GM18951 (cell line): ENCODE measurements at regions of chr1 and their contacts with region 1.

Region 1: GRCh38 chr1:180515864-180516388 is 13.5 kb upstream of the ACBD6 start:
- POLR2A ChIP-seq: no peak

Region 2: DNA sequence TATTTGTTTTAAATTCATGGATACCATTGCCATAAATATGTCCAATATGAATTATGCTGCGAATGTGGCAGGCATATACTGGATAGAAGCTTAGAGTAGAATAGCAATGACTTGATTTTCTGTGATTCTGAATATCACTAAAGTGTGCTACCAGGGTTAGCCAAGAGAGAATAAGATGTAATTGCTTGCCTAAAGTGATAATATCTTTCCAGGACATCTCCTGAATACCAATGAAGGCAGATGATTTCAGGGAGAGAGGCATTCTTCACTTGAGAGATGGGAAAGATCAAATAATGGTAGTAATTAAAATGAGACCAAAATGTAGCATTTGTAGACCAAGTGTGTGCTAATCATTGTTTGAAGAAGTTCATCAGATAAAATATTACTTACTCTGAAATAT is 343.4 kb after region 1 on chr1:
- in situ Hi-C with region 1: loop called (anchors 5 kb)
- POLR2A ChIP-seq: no peak